Heart left ventricle (tissue), 16 donors: ENCODE measurements at regions of chr16 and their contacts with region 1.

Region 1: DNA sequence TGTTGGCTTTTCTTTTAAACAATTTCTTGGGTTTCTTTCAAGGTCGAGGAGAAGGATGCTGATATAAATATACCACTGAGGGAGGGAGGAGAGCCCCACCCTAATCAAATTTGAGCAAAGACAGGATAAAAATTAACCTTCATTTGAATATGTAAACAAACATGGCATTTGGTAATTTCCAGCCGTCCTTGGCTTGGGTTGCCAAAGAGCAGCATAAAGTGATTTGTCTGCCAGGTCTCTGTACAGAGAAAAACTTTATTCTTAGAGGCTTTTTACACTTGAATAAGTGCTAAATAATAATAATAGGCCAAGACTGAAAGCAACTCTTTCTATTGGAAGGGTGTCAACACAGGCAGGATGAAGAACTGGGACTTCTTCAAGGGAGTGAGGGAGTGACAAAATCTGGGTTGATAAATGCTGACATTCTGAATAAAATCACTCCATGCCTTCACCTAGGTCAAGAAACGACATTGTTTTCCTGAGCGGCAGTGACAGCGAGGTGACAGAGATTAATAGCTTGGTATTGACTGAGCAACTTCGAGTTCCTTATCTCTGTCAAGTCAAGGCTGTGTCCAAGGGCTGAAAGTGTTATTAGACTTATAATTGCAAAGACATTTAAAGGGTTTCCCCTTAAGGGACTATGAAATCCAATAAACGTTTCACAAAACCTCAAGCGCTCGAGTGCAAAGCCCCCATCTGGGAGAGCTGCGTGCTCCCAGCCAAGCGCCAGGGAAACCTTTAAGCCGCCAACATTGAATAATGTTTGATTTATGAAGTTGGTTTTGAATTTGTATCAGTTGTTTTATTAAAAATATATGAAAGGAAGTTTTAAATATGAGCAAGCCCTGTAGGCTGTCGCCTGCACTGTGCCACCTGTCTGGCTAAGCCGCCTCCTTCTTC is 269.5 kb upstream of the N4BP1 start:
- DNase-seq: no peak
- ATAC-seq: no peak
- H3K4me3 ChIP-seq: no peak overlapping the region
- H3K27ac ChIP-seq: no peak overlapping the region
- H3K4me1 ChIP-seq: no peaks in the 10 kb centered on the region
- H3K27me3 ChIP-seq: no peaks in the 10 kb centered on the region
- CTCF ChIP-seq: no peak
- POLR2A ChIP-seq: no peak

Region 2: GRCh38 chr16:48831076-48831722 is 48.3 kb before region 1 on chr16:
- intact Hi-C with region 1: loop called in 1 of 10 experiments (anchors 5 kb)
- DNase-seq: no peak
- ATAC-seq: no peak
- H3K4me3 ChIP-seq: no peak overlapping the region
- H3K27ac ChIP-seq: no peak overlapping the region
- H3K4me1 ChIP-seq: no peaks in the 10 kb centered on the region
- H3K27me3 ChIP-seq: peaks cover 0 to 22% (median 0%) of the 10 kb centered on the region in 9 donors
- CTCF ChIP-seq: peak in 6 of 12 donors; percentile 7 to 41 (median 23)
- POLR2A ChIP-seq: no peak

Region 3: GRCh38 chr16:48959204-48959603 is 79.7 kb after region 1 on chr16:
- intact Hi-C with region 1: no loop called
- DNase-seq: peak in 2 of 5 donors; percentile 29 to 35
- ATAC-seq: peak in 1 of 4 donors; percentile 8
- H3K4me3 ChIP-seq: no peak overlapping the region
- H3K27ac ChIP-seq: peak overlapping the region in 2 of 12 donors; percentile 22 to 24
- H3K4me1 ChIP-seq: peaks cover 0 to 36% (median 5%) of the 10 kb centered on the region in 12 donors
- H3K27me3 ChIP-seq: no peaks in the 10 kb centered on the region
- CTCF ChIP-seq: no peak
- POLR2A ChIP-seq: no peak